Aorta (tissue), 5 donors: ENCODE measurements at regions of chr6 and their contacts with region 1.

Region 1: GRCh38 chr6:128380891-128381290 is 139.5 kb downstream of the PTPRK start:
- DNase-seq: no peak
- ATAC-seq: no peak
- H3K4me3 ChIP-seq: no peak overlapping the region
- H3K27ac ChIP-seq: no peak overlapping the region
- H3K4me1 ChIP-seq: no peaks in the 10 kb centered on the region
- H3K27me3 ChIP-seq: no peaks in the 10 kb centered on the region

Region 2: GRCh38 chr6:128432394-128432793 is 51.5 kb after region 1 on chr6:
- intact Hi-C with region 1: loop called in 1 of 2 experiments (anchors 5 kb)
- DNase-seq: no peak
- ATAC-seq: no peak
- H3K4me3 ChIP-seq: no peak overlapping the region
- H3K27ac ChIP-seq: no peak overlapping the region
- H3K4me1 ChIP-seq: no peaks in the 10 kb centered on the region
- H3K27me3 ChIP-seq: no peaks in the 10 kb centered on the region

Region 3: GRCh38 chr6:128456510-128457230 is 75.8 kb after region 1 on chr6:
- intact Hi-C with region 1: no loop called
- DNase-seq: no peak
- ATAC-seq: no peak
- H3K4me3 ChIP-seq: no peak overlapping the region
- H3K27ac ChIP-seq: no peak overlapping the region
- H3K4me1 ChIP-seq: peaks cover 0 to 4% of the 10 kb centered on the region in 2 donors
- H3K27me3 ChIP-seq: no peaks in the 10 kb centered on the region